ENCODE measurements at regions of chr6 and their contacts with region 1.

Region 1: DNA sequence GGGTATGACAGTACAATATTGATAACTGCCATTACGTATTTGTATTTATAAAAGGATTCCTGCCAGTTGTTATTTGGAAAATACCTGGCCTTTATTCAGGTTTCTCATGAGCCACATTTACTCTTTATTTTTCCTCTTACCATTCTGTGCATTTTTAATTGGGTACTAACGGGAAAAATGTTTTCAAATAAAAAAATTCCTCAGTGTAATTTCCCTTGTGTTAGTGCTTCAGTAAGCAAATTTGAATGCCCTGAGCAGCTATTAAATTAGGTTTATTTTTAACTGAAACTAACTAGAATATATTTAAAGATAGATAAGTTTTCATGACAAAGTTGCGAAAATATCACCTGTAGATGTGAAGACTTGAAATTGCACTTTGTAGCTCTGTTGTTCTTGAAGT is 146.0 kb downstream of the PTCHD4 start:
- DNase-seq: no peak
- H3K4me3 ChIP-seq: no peak overlapping the region
- H3K4me3 Mint-ChIP-seq: no peak overlapping the region
- H3K27ac Mint-ChIP-seq: no peak overlapping the region
- H3K4me1 ChIP-seq: no peaks in the 10 kb centered on the region
- H3K4me1 Mint-ChIP-seq: no peaks in the 10 kb centered on the region
- H3K27me3 ChIP-seq: no peaks in the 10 kb centered on the region
- H3K27me3 Mint-ChIP-seq: peaks cover 2% of the 10 kb centered on the region
- CTCF ChIP-seq: no peak

Region 2: GRCh38 chr6:47917811-47918210 is 47.2 kb before region 1 on chr6:
- CTCF ChIA-PET with region 1: no interaction called
- POLR2A ChIA-PET with region 1: no interaction called
- intact Hi-C with region 1: loop called (anchors 1 kb)
- DNase-seq: no peak
- H3K4me3 ChIP-seq: no peak overlapping the region
- H3K4me3 Mint-ChIP-seq: no peak overlapping the region
- H3K27ac Mint-ChIP-seq: no peak overlapping the region
- H3K4me1 ChIP-seq: no peaks in the 10 kb centered on the region
- H3K4me1 Mint-ChIP-seq: no peaks in the 10 kb centered on the region
- H3K27me3 ChIP-seq: no peaks in the 10 kb centered on the region
- H3K27me3 Mint-ChIP-seq: peaks cover 2% of the 10 kb centered on the region
- CTCF ChIP-seq: no peak

Region 3: DNA sequence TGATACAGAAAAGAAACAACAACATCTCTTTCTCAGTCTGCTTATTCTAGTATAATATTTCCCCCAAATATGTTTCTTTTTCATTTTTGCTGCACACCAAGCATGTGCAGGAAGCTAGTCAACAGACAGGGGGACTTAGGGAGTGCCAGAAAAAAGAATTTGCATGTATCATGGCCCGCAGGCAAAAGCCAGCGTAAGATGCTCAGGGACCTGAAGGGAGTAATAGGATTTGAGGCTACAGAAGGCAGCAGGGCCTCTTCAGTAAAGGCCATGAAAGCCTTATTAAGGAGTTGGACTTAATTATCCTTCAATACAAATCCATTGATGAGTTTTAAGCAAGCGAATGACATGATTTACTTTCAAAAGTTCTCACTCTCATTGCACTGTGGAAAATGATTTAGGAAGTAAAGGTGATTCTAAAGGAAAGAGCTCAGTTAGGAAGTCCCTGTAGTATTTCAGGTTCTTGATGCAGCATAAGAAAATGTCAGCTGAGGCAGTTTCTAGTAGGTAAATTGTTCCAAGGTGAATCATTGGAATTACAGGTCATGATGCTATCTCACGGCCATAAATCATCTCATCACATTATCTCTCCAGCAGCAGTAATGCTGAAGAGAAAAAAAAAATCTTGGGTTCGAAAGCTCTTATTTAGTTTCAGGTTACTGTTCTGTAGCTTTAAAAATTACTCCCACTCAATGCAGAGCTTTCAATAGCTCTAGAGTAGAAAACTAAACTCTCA is 51.2 kb after region 1 on chr6:
- CTCF ChIA-PET with region 1: no interaction called
- POLR2A ChIA-PET with region 1: no interaction called
- intact Hi-C with region 1: no loop called
- DNase-seq: no peak
- H3K4me3 ChIP-seq: no peak overlapping the region
- H3K4me3 Mint-ChIP-seq: no peak overlapping the region
- H3K27ac Mint-ChIP-seq: no peak overlapping the region
- H3K4me1 ChIP-seq: no peaks in the 10 kb centered on the region
- H3K4me1 Mint-ChIP-seq: no peaks in the 10 kb centered on the region
- H3K27me3 ChIP-seq: no peaks in the 10 kb centered on the region
- H3K27me3 Mint-ChIP-seq: peaks cover 5% of the 10 kb centered on the region
- CTCF ChIP-seq: no peak

Region 4: DNA sequence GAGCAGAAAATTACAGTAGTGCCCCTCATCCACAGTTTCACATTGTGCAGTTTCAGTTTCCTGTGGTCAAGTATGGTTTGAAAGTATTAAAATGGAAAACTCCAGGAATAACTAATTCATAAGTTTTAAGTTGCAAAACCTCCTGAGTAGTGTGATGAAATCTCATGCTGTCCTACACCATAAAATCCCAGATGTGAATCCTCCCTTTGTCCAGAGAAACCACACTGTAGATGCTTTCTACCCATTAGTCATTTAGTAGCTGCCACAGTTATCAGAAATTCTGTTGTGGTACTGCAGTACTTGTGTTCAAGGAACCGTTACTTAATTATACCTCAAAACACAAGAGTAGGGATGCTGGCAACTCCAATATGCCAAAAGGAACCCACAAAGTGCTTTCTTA is 71.3 kb after region 1 on chr6:
- CTCF ChIA-PET with region 1: no interaction called
- POLR2A ChIA-PET with region 1: no interaction called
- intact Hi-C with region 1: no loop called
- DNase-seq: no peak
- H3K4me3 ChIP-seq: no peak overlapping the region
- H3K4me3 Mint-ChIP-seq: no peak overlapping the region
- H3K27ac Mint-ChIP-seq: no peak overlapping the region
- H3K4me1 ChIP-seq: no peaks in the 10 kb centered on the region
- H3K4me1 Mint-ChIP-seq: peaks cover 6% of the 10 kb centered on the region
- H3K27me3 ChIP-seq: no peaks in the 10 kb centered on the region
- H3K27me3 Mint-ChIP-seq: peaks cover 11% of the 10 kb centered on the region
- CTCF ChIP-seq: no peak